ENCODE measurements at regions of chr1 and their contacts with region 1.

Region 1: GRCh38 chr1:152034646-152035405 is 2.0 kb downstream of the S100A11 start:
- DNase-seq: peak; percentile 67
- ATAC-seq: peak; percentile 71
- H3K4me3 Mint-ChIP-seq: peak overlapping the region; percentile 96
- H3K27ac Mint-ChIP-seq: peak overlapping the region; percentile 94
- H3K4me1 Mint-ChIP-seq: peaks cover 29% of the 10 kb centered on the region
- H3K27me3 Mint-ChIP-seq: no peaks in the 10 kb centered on the region

Region 2: DNA sequence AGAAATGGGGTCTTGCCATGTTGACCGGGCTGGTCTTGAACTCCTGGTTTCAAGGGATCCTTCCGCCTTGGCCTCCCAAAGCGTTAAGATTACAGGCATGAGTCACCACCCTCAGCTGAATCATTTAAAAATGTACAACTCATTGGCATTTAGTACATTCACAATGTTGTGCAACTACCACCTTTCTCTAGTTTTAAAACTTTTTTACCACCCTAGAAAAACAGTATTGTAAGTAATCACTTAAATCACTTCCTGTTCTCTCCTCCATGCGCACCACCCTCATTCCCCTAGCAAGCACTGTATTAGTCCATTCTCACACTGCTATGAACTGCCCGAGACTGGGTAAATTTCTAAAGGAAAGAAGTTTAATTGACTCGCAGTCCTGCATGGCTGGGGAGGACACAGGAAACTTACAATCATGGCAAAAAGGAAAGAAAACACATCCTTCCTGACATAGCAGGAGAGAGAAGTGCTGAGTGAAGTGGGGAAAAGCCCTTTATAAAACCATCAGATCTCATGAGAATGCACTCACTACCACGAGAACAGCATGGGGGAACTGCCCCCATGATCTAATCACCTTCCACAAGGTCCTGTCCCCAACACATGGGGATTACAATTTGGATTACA is 166.9 kb before region 1 on chr1:
- POLR2A ChIA-PET with region 1: no interaction called
- DNase-seq: no peak
- ATAC-seq: no peak
- H3K4me3 Mint-ChIP-seq: no peak overlapping the region
- H3K27ac Mint-ChIP-seq: no peak overlapping the region
- H3K4me1 Mint-ChIP-seq: peaks cover 3% of the 10 kb centered on the region
- H3K27me3 Mint-ChIP-seq: peaks cover 3% of the 10 kb centered on the region

Region 3: DNA sequence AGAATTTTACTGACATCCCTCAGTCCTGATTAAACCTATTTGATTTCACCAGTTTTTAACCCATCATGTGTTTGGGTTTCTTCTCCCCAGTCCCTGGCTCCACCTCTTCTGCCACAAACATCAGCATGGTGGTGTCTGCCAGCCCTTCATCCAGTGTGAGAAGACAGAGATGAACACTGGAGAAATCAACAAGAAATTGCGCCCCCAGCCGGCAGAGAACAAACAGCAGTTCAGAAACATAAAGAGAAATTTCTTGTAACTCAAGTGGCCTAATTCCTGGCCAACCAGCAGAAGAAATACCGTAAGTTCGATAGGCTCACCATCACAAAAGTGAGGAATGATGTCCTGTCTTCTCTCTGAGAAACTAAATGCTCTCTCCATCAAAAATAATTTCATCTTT is 16.3 kb before region 1 on chr1:
- POLR2A ChIA-PET with region 1: no interaction called
- DNase-seq: no peak
- ATAC-seq: no peak
- H3K4me3 Mint-ChIP-seq: no peak overlapping the region
- H3K27ac Mint-ChIP-seq: no peak overlapping the region
- H3K4me1 Mint-ChIP-seq: peaks cover 4% of the 10 kb centered on the region
- H3K27me3 Mint-ChIP-seq: peaks cover 17% of the 10 kb centered on the region

Region 4: GRCh38 chr1:152047730-152048402 is 13.0 kb after region 1 on chr1:
- POLR2A ChIA-PET with region 1: interaction called, 83 read pairs
- DNase-seq: peak; percentile 81
- ATAC-seq: peak; percentile 95
- H3K4me3 Mint-ChIP-seq: peak overlapping the region; percentile 68
- H3K27ac Mint-ChIP-seq: peak overlapping the region; percentile 94
- H3K4me1 Mint-ChIP-seq: peaks cover 23% of the 10 kb centered on the region
- H3K27me3 Mint-ChIP-seq: peaks cover 4% of the 10 kb centered on the region

Region 5: GRCh38 chr1:152107984-152108881 is 73.4 kb after region 1 on chr1:
- POLR2A ChIA-PET with region 1: no interaction called
- DNase-seq: peak; percentile 29
- ATAC-seq: no peak
- H3K4me3 Mint-ChIP-seq: no peak overlapping the region
- H3K27ac Mint-ChIP-seq: peak overlapping the region; percentile 72
- H3K4me1 Mint-ChIP-seq: no peaks in the 10 kb centered on the region
- H3K27me3 Mint-ChIP-seq: peaks cover 19% of the 10 kb centered on the region

Region 6: DNA sequence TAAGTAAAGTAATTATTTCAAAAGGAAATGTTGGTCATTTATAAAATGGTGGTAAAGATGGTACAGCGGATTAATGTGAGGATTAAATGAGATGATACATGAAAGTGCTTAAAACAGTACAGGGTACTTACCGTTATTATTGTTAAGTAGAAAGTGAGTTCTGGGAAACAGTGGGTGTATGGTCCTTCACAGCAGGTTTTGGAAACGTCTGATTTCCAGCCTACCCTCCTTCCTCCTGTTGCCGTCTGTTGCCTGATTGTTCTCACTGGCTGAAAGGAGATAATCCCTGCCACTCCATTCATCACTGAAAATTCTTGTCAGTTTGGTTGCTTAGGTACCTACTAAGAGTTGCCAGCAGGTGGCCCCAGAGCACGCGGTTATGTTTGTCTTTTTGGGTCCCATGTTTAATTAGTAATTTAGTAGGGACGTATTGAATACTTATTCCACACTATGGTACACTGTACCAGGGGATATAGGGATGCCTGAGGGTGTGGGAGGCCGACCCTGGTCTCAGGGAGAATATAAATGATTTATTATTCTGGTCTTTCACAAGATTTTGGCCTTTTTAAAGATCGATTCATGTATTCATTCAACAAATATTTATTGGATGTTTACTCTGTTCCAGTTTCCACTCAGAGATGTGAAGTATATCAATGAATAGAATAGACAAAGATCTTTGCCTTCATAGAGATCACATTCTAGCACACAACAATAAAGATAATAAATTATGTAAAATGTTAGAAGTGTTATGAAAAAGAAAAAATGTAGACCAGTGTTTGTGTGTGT is 155.0 kb after region 1 on chr1:
- POLR2A ChIA-PET with region 1: no interaction called
- DNase-seq: peak; percentile 67
- ATAC-seq: peak; percentile 47
- H3K4me3 Mint-ChIP-seq: peak overlapping the region; percentile 81
- H3K27ac Mint-ChIP-seq: no peak overlapping the region
- H3K4me1 Mint-ChIP-seq: peaks cover 11% of the 10 kb centered on the region
- H3K27me3 Mint-ChIP-seq: peaks cover 3% of the 10 kb centered on the region

Measured in activated naive CD8-positive, alpha-beta T cell treated with anti-CD3 and anti-CD28 coated beads, Interleukin-2, amount 10 ng/mL, durations not matched to agents 7 days and 5 days (primary cell).